ENCODE measurements at regions of chr2 and their contacts with region 1.

Region 1: DNA sequence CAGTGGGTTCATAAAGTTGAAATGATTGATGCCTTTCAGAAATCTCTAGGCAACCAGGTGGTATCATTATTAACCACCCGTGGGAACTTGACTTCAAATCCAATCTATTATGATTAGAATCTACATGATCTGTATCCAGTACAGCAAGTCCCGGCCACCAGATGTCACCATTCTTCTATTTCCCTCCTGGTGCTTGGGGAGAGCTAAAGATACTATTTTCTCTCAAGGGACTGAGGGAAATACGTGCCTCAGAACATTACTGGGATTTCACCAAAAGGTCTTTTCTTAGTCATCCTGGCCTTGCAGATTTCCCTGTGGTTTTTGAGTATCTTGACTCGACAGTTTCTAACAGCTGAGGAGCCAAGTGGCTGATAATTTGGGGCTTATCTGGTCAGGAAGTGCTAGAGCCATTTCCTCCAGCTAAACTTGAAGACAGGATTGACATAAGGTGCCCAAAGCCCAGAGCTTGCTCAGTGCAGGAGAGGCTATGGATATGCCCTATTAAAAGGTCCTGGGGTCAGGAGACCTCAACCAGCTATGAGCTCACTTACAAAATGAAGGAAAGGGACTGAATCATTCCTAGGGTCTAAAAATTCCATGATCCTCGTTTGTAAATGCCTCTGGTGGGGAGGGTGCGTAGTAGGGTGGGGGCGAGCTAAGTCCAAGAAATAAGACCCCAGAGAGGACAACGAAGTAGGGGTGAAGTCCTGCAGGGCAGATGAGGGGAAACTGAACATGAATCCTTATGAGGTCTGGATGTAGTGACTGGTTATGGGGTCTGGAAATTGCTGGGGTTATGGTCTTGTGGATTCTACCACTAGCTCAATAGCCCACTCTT is 135.4 kb upstream of the MGAT5 start:
- DNase-seq: peak; percentile 67 to 90 (median 85)
- ATAC-seq: peak; percentile 22
- H3K4me3 ChIP-seq: no peak overlapping the region
- H3K4me3 Mint-ChIP-seq: peak overlapping the region; percentile 99
- H3K27ac ChIP-seq: no peak overlapping the region
- H3K27ac Mint-ChIP-seq: peak overlapping the region; percentile 1
- H3K4me1 ChIP-seq: peaks cover 34% of the 10 kb centered on the region
- H3K4me1 Mint-ChIP-seq: peaks cover 35% of the 10 kb centered on the region
- H3K27me3 ChIP-seq: no peaks in the 10 kb centered on the region
- H3K27me3 Mint-ChIP-seq: no peaks in the 10 kb centered on the region
- CTCF ChIP-seq: peak; percentile 85

Region 2: GRCh38 chr2:133791191-133791590 is 327.3 kb before region 1 on chr2:
- CTCF ChIA-PET with region 1: no interaction called
- POLR2A ChIA-PET with region 1: no interaction called
- intact Hi-C with region 1: no loop called
- DNase-seq: no peak
- ATAC-seq: no peak
- H3K4me3 ChIP-seq: no peak overlapping the region
- H3K4me3 Mint-ChIP-seq: no peak overlapping the region
- H3K27ac ChIP-seq: no peak overlapping the region
- H3K27ac Mint-ChIP-seq: no peak overlapping the region
- H3K4me1 ChIP-seq: no peaks in the 10 kb centered on the region
- H3K4me1 Mint-ChIP-seq: no peaks in the 10 kb centered on the region
- H3K27me3 ChIP-seq: no peaks in the 10 kb centered on the region
- H3K27me3 Mint-ChIP-seq: peaks cover 5% of the 10 kb centered on the region
- CTCF ChIP-seq: no peak

Region 3: DNA sequence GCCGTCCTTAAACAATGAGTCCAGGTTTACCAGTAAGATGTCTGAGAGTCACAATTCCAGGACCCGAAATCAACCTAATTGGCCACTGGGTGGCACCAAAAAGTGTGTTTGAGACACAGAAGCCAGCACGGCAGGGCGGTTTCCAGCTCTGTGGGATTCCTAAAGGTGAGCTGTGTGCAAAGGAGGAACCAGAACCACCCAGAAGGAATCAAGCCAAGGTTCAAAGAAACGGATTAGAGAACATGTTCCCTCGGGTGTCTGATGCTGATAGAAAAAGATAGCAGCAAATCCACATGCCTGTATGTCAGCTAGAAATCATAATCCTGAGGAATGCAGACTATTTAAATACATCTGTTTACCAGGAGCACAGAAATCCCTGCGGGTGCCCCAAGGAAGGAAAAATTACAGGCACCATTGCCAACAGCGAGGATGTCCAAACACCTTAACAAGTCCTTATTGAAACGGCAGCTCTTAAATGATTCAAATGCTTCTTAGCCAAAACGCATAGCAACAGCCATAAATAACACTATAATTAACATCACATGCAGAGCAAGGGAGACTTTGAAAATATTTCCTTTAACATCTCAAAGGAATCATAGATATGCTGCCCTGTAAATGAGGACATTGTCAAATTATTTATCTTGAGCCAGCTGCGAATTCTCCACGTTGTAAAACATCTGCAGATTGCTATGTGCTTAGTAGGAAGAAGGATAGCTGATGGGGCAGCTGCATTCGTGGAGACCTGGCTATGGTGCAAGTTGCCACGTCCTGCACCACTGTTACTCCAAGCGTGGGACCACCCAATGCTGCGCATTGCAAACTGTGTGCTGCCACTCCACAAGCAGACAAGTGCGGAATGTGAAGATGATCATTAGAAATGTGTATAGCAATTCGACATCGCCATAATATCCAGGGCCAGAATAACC is 231.5 kb before region 1 on chr2:
- CTCF ChIA-PET with region 1: interaction called, 4 read pairs
- POLR2A ChIA-PET with region 1: no interaction called
- intact Hi-C with region 1: loop called (anchors 5 kb)
- DNase-seq: peak; percentile 4 to 61 (median 48)
- ATAC-seq: no peak
- H3K4me3 ChIP-seq: no peak overlapping the region
- H3K4me3 Mint-ChIP-seq: no peak overlapping the region
- H3K27ac ChIP-seq: no peak overlapping the region
- H3K27ac Mint-ChIP-seq: no peak overlapping the region
- H3K4me1 ChIP-seq: no peaks in the 10 kb centered on the region
- H3K4me1 Mint-ChIP-seq: peaks cover 2% of the 10 kb centered on the region
- H3K27me3 ChIP-seq: no peaks in the 10 kb centered on the region
- H3K27me3 Mint-ChIP-seq: peaks cover 4% of the 10 kb centered on the region
- CTCF ChIP-seq: peak; percentile 46

Region 4: DNA sequence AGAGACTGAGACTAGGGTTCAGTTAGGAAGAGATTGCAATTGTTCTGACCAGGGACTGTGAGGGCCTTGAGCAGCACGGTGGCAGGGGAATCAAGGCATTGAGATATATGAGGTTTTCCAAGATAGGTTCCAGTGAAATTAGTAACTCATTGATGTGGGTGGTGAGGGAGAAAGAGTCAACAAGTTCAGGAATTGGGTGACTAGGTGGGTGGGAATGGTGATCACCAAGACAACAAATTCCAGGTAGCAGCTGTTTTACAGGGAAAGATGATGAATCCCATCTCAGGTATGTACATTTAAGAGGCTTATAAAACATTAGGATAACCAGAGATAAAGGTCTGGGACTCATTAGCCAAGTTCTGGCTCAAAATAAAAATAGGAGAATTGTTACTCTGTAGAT is 116.1 kb before region 1 on chr2:
- CTCF ChIA-PET with region 1: no interaction called
- POLR2A ChIA-PET with region 1: no interaction called
- intact Hi-C with region 1: no loop called
- DNase-seq: no peak
- ATAC-seq: no peak
- H3K4me3 ChIP-seq: no peak overlapping the region
- H3K4me3 Mint-ChIP-seq: no peak overlapping the region
- H3K27ac ChIP-seq: no peak overlapping the region
- H3K27ac Mint-ChIP-seq: no peak overlapping the region
- H3K4me1 ChIP-seq: no peaks in the 10 kb centered on the region
- H3K4me1 Mint-ChIP-seq: no peaks in the 10 kb centered on the region
- H3K27me3 ChIP-seq: no peaks in the 10 kb centered on the region
- H3K27me3 Mint-ChIP-seq: peaks cover 12% of the 10 kb centered on the region
- CTCF ChIP-seq: no peak

Region 5: GRCh38 chr2:134207564-134208209 is 89.2 kb after region 1 on chr2:
- CTCF ChIA-PET with region 1: interaction called, 211 read pairs
- POLR2A ChIA-PET with region 1: interaction called, 31 read pairs
- intact Hi-C with region 1: loop called (anchors 5 kb)
- DNase-seq: peak; percentile 38 to 81 (median 71)
- ATAC-seq: peak; percentile 94
- H3K4me3 ChIP-seq: no peak overlapping the region
- H3K4me3 Mint-ChIP-seq: no peak overlapping the region
- H3K27ac ChIP-seq: no peak overlapping the region
- H3K27ac Mint-ChIP-seq: no peak overlapping the region
- H3K4me1 ChIP-seq: peaks cover 34% of the 10 kb centered on the region
- H3K4me1 Mint-ChIP-seq: peaks cover 3% of the 10 kb centered on the region
- H3K27me3 ChIP-seq: no peaks in the 10 kb centered on the region
- H3K27me3 Mint-ChIP-seq: no peaks in the 10 kb centered on the region
- CTCF ChIP-seq: peak; percentile 63

Region 6: DNA sequence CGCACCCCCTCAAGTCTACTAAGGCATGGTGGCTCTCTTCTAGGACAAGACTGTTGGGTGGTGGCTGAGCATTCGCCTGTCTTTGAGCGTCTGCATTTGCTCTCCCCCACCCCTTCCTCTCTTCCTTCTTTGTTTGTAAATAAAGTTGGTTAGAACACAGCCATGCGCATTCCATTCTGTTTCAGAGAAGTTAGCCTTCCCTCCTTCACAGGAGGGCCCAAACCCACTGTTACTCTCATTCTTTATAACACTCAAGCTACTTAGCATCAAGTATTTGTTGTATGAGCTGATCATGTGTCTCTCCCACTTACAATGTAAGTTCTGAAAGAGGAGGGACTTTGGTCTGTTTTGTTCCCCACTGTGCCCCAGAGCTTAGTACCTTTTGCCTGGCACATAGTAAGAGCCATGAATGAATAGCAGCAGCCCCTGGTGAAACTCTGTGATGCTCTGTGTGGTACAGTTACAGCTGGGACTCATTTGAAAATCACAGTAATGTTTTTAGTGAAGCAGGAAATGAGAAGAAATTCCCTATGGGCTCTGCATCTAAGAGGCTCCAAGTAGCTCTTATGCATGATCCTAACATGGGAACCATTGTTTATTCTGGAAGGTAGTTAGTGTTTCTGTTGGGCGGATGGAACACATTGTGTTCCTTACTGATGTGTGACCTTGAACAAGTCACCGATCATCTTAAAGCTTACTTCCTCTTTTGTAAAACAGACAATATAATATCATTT is 143.1 kb after region 1 on chr2:
- CTCF ChIA-PET with region 1: interaction called, 13 read pairs
- POLR2A ChIA-PET with region 1: no interaction called
- intact Hi-C with region 1: no loop called
- DNase-seq: no peak
- ATAC-seq: no peak
- H3K4me3 ChIP-seq: no peak overlapping the region
- H3K4me3 Mint-ChIP-seq: no peak overlapping the region
- H3K27ac ChIP-seq: no peak overlapping the region
- H3K27ac Mint-ChIP-seq: peak overlapping the region; percentile 24
- H3K4me1 ChIP-seq: peaks cover 71% of the 10 kb centered on the region
- H3K4me1 Mint-ChIP-seq: peaks cover 78% of the 10 kb centered on the region
- H3K27me3 ChIP-seq: peaks cover 0 to 3% of the 10 kb centered on the region in 2 experiments
- H3K27me3 Mint-ChIP-seq: no peaks in the 10 kb centered on the region
- CTCF ChIP-seq: no peak

Region 7: DNA sequence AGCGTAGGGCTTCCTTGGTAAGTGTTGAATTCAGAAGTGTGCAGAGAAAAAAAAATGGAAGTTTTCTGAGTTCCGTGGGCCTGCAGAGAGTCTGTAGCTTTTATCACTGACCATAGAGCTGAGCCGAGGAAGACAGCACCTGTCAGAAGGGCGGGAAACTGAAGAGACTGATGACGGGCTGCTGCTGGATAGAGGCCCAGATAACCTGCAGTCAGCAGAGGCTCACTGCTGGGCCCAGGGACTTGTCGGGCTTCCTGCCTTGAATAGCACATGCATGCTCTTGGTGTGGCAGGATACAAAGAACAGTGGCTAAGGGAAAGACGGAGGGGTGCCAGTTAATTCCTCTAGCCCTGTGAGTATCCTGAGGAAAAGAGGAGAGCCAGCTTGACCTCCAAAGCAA is 301.8 kb after region 1 on chr2:
- CTCF ChIA-PET with region 1: interaction called, 14 read pairs
- POLR2A ChIA-PET with region 1: no interaction called
- intact Hi-C with region 1: no loop called
- DNase-seq: peak in 1 of 9 experiments; percentile 25
- ATAC-seq: no peak
- H3K4me3 ChIP-seq: no peak overlapping the region
- H3K4me3 Mint-ChIP-seq: no peak overlapping the region
- H3K27ac ChIP-seq: no peak overlapping the region
- H3K27ac Mint-ChIP-seq: no peak overlapping the region
- H3K4me1 ChIP-seq: no peaks in the 10 kb centered on the region
- H3K4me1 Mint-ChIP-seq: no peaks in the 10 kb centered on the region
- H3K27me3 ChIP-seq: no peaks in the 10 kb centered on the region
- H3K27me3 Mint-ChIP-seq: no peaks in the 10 kb centered on the region
- CTCF ChIP-seq: no peak

Region 8: DNA sequence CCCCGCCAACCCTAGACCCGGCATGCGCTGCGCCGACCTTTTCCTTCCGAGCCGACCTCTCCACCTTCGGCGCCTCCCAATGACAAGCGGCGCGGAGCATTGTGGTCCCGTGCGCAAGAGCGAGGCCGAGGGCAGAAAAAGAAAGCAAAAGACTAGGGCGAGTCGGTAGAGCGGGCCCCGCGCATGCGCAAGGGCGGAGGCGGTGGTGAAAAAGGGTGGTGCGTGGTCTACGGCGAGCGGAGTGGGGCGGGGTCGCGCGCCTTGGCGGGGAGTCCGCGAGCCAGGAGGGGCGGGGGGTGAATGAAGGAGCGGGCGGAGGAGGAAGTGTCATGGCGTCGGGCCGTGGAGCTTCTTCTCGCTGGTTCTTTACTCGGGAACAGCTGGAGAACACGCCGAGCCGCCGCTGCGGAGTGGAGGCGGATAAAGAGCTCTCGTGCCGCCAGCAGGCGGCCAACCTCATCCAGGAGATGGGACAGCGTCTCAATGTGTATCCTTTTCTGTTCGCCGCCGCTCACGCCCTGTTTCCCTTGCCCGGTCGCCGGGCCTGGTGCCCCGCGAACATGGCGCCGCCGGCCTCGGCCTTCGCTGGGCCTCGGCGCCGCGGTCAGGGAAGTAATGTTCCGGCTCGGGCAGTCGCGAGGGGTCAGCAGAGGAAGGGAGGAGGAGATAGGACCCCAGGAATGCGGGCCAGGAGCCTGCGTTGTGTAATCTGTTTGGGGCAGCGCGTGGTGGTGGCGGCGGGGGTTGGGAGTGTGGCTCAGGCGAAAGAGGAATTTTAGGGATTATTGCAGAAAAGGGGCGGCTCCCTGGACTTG is 800.2 kb after region 1 on chr2 and contains the start of gene CCNT2:
- CTCF ChIA-PET with region 1: interaction called, 4 read pairs
- POLR2A ChIA-PET with region 1: no interaction called
- intact Hi-C with region 1: loop called (anchors 1 kb)
- DNase-seq: peak; percentile 99 to 100 (median 99)
- ATAC-seq: peak; percentile 85
- H3K4me3 ChIP-seq: peak within 1 kb of the TSS; percentile 91 to 96
- H3K4me3 Mint-ChIP-seq: peak within 1 kb of the TSS; percentile 92
- H3K27ac ChIP-seq: peak within 1 kb of the TSS; percentile 97
- H3K27ac Mint-ChIP-seq: peak within 1 kb of the TSS; percentile 97
- H3K4me1 ChIP-seq: peaks cover 44% of the 10 kb centered on the region
- H3K4me1 Mint-ChIP-seq: peaks cover 51% of the 10 kb centered on the region
- H3K27me3 ChIP-seq: no peaks in the 10 kb centered on the region
- H3K27me3 Mint-ChIP-seq: no peaks in the 10 kb centered on the region
- CTCF ChIP-seq: no peak
- total RNA-seq, gene CCNT2: 67.0 to 71.9 TPM